Prostate gland (tissue), 2 donors: ENCODE measurements at regions of chr9 and their contacts with region 1.

Region 1: DNA sequence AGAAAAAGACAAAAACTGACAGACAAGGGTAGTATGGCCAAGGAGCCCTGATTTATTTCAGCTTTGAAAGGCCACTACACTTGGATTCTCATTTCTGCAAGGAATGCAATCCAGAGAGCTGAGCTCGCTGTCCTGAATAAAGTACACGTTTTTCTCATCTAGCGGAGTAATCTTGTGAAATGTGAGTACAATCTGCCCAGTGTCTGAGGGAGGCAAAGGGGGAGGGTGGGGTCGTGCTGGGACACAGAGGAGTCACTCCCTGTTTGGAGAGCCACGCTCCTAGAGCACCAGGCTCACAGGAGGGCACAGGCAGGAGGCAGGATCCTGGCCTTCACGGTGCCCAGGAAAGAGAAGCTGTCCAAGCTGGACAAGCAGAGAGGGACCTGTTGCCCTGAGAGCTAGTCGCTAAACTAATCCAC is 51.0 kb upstream of the IFNK start:
- DNase-seq: no peak
- H3K4me3 ChIP-seq: no peak overlapping the region
- H3K27ac ChIP-seq: no peak overlapping the region
- H3K4me1 ChIP-seq: no peaks in the 10 kb centered on the region
- H3K27me3 ChIP-seq: no peaks in the 10 kb centered on the region
- CTCF ChIP-seq: no peak
- POLR2A ChIP-seq: no peak

Region 2: DNA sequence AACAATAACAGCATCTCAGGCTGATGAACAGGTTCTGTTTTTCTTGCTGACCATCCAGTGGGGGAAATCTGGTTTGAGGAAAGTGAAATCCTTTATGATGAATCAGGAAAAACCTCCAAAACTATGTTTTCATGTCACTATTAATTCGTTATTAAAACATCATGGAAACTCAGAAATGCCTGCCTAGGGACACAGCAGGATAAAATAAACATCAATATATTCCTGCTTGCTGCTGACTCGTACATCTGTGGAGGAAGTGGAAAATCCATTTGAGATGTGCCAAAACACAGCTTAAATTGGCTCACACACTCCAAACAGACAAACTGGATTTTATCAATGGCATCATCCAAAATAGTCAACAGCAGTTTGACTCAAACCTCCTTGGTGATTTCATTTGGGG is 311.1 kb before region 1 on chr9:
- intact Hi-C with region 1: no loop called
- DNase-seq: no peak
- H3K4me3 ChIP-seq: no peak overlapping the region
- H3K27ac ChIP-seq: no peak overlapping the region
- H3K4me1 ChIP-seq: no peaks in the 10 kb centered on the region
- H3K27me3 ChIP-seq: no peaks in the 10 kb centered on the region
- CTCF ChIP-seq: no peak
- POLR2A ChIP-seq: no peak

Region 3: DNA sequence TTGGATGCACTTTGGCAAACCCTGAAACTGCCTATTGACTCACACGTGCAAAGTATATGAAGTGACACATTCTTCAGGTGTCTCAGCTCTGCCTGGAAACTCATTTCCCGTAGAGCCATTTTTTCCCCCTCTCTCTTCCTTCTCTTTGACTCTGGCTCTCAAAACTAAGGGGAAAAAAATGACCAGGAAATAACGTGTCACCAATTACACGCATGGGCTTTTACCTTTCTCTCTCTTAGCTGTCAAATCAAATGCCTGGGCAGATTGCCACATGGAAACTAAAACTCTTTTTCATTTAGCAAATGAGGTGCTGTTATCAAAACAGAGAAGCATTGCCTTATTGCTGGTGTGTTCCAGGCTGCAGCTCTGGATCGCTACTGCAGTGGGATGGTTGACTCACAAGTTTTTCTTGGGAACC is 32.6 kb after region 1 on chr9:
- intact Hi-C with region 1: no loop called
- DNase-seq: no peak
- H3K4me3 ChIP-seq: no peak overlapping the region
- H3K27ac ChIP-seq: no peak overlapping the region
- H3K4me1 ChIP-seq: no peaks in the 10 kb centered on the region
- H3K27me3 ChIP-seq: no peaks in the 10 kb centered on the region
- CTCF ChIP-seq: no peak
- POLR2A ChIP-seq: no peak

Region 4: DNA sequence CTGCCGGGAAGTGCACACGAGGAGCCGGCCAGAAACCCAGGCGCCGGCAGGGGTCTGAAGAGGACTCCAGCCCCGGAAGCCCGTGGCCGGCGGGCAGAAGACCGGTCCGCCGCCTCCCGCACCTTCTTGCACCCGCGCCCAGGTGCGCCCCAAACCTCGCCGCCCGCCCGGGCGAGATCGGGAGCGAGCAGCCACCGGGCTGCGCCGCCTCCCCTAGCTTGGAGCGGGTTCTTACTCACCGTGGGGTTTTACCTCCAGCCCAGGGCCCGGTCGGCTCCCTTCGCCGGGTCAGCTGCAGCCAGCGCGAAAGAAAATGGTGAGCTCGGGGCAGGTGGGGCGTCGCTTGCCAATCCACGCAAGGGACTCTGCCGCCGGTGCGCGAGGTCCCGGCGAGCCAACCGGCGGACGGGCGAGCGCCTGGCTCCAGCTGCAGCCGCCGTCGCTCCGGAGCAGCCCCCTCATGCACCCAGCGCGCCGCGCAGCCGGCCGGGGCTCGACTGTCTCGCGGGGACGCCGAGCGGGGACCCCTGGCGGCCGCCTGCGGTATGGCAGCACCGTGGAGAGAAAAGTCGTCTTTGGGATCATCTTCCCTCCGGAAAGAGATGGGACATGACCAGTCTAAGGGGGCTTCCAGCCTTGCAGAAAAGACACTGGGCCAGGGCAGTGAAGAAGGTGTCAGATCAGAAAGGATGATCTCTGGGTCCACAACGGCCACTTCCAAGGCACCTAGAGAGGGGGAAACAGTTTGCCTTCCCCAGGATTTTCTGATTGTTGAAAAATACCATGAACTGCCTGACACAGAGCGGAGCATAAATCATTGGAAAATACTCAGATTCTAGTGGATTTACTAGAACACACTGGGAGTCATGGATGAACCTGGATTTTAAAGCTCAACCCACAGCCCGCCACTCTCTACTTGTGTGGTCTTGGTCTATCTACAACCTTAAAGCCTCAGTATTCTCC is 56.5 kb after region 1 on chr9 and contains the start of gene MOB3B:
- intact Hi-C with region 1: loop called (anchors 2 kb)
- DNase-seq: peak; percentile 74
- H3K4me3 ChIP-seq: peak within 1 kb of the TSS; percentile 66 to 72
- H3K27ac ChIP-seq: peak within 1 kb of the TSS; percentile 78
- H3K4me1 ChIP-seq: peaks cover 4% of the 10 kb centered on the region
- H3K27me3 ChIP-seq: no peaks in the 10 kb centered on the region
- CTCF ChIP-seq: peak; percentile 82 to 94 (median 92)
- POLR2A ChIP-seq: no peak
- total RNA-seq, gene MOB3B: 3.1 to 17.8 TPM